ENCODE measurements at regions of chr3 and their contacts with region 1.

Region 1: GRCh38 chr3:122305818-122306621 is 19.0 kb upstream of the CSTA start:
- DNase-seq: peak; percentile 56
- H3K4me3 ChIP-seq: no peak overlapping the region
- H3K27ac ChIP-seq: no peak overlapping the region
- H3K4me1 ChIP-seq: peaks cover 19% of the 10 kb centered on the region
- H3K27me3 ChIP-seq: no peaks in the 10 kb centered on the region
- CTCF ChIP-seq: peak; percentile 53 to 78

Region 2: DNA sequence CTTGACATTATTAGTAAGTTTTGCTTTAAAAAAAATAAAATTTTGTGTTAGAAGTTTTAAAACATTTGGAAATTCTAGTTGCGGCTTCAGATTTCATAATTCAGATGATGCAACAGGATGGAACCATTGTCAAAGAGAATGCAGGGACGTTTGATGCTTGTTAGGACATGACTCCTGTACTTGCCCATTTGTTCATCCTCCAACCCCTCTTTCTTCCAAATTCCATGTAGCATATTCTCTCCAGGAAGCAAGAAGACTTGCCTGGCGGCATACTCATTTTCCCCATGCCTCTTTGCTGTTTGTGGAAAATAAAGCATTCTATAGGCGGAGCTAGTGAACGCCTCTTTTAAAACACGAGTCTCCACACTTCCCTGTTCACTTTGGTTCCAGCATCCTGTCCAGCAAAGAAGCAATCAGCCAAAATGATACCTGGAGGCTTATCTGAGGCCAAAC is 18.9 kb after region 1 on chr3 and contains the start of gene CSTA:
- CTCF ChIA-PET with region 1: interaction called, 7 read pairs
- dilution Hi-C with region 1: no loop called
- in situ Hi-C with region 1: no loop called
- intact Hi-C with region 1: loop called (anchors 1 kb)
- DNase-seq: peak; percentile 96
- H3K4me3 ChIP-seq: peak within 1 kb of the TSS; percentile 56 to 61 (median 57)
- H3K27ac ChIP-seq: peak within 1 kb of the TSS; percentile 93
- H3K4me1 ChIP-seq: peaks cover 16% of the 10 kb centered on the region
- H3K27me3 ChIP-seq: no peaks in the 10 kb centered on the region
- CTCF ChIP-seq: peak in 1 of 2 donors; percentile 17
- total RNA-seq, gene CSTA: 62.0 to 335 TPM

Region 3: GRCh38 chr3:122356415-122356814 is 50.4 kb after region 1 on chr3:
- CTCF ChIA-PET with region 1: interaction called, 21 read pairs
- dilution Hi-C with region 1: no loop called
- in situ Hi-C with region 1: loop called (anchors 10 kb)
- intact Hi-C with region 1: loop called (anchors 1 kb)
- DNase-seq: peak; percentile 72
- H3K4me3 ChIP-seq: no peak overlapping the region
- H3K27ac ChIP-seq: no peak overlapping the region
- H3K4me1 ChIP-seq: peaks cover 21% of the 10 kb centered on the region
- H3K27me3 ChIP-seq: no peaks in the 10 kb centered on the region
- CTCF ChIP-seq: peak; percentile 68 to 84

Region 4: GRCh38 chr3:122383771-122384697 is 78.0 kb after region 1 on chr3 and contains the start of gene FAM162A:
- CTCF ChIA-PET with region 1: interaction called, 4 read pairs
- dilution Hi-C with region 1: no loop called
- in situ Hi-C with region 1: no loop called
- intact Hi-C with region 1: loop called (anchors 1 kb)
- DNase-seq: peak; percentile 91
- H3K4me3 ChIP-seq: peak within 1 kb of the TSS; percentile 64 to 87 (median 78)
- H3K27ac ChIP-seq: peak within 1 kb of the TSS; percentile 84
- H3K4me1 ChIP-seq: peaks cover 17% of the 10 kb centered on the region
- H3K27me3 ChIP-seq: no peaks in the 10 kb centered on the region
- CTCF ChIP-seq: peak; percentile 19 to 65
- total RNA-seq, gene FAM162A: 14.2 to 55.3 TPM

Region 5: GRCh38 chr3:123552095-123552714 is 1246.2 kb after region 1 on chr3:
- CTCF ChIA-PET with region 1: no interaction called
- dilution Hi-C with region 1: no loop called
- in situ Hi-C with region 1: no loop called
- intact Hi-C with region 1: no loop called
- DNase-seq: peak; percentile 19
- H3K4me3 ChIP-seq: no peak overlapping the region
- H3K27ac ChIP-seq: no peak overlapping the region
- H3K4me1 ChIP-seq: no peaks in the 10 kb centered on the region
- H3K27me3 ChIP-seq: no peaks in the 10 kb centered on the region
- CTCF ChIP-seq: peak; percentile 48 to 54